Activated T-helper 1 cell treated with anti-CD3 and anti-CD28 coated beads, Interleukin-12 subunit alpha, Interleukin-12 subunit beta, Interleukin-2, Interleukin-4 antibody, amounts not matched to agents 30 ng/mL and 10 ng/mL and 1 ng/mL, durations not matched to agents 14 hours and 24 hours and 36 hours (primary cell): ENCODE measurements at regions of chr7 and their contacts with region 1.

Region 1: DNA sequence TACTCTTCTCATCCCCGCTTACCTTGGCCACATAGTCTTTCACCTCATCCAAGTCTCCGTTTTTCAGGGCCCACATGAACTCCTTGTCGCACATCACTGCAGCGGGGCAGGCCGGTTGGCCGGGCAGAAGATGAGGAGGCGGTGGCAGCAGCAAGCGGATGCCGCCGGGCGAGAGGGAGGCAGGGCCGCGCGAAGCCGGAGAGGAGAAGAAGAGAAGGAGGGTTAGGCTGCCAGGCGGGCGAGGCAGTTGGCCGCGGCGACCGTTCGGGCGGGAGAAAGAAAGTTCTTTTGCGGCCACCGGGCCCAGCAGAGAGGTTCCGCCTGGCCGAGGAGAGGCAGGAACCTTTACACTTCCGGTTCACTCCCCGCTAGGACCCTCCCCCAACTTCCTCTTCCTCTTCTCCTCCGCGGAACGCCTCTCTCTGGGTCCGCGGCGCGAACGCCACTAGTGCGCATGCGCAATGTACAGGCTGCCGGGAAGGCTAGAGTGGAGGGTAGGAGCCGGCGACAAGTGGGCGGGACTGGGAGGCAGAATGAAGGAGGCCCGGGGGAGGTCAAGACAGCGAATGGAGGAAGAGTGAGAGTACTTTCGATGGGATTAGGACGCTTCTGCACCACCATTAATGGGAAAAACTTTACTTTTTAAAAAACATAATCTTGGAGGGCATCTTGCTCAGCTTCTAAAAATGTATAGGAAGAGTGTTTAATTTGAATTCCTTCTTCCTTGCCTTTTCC is at the start of gene MTPN:
- DNase-seq: peak; percentile 98
- H3K4me3 Mint-ChIP-seq: peak within 1 kb of the TSS; percentile 98
- H3K27ac Mint-ChIP-seq: peak within 1 kb of the TSS; percentile 88
- H3K4me1 Mint-ChIP-seq: peaks cover 75% of the 10 kb centered on the region
- H3K27me3 Mint-ChIP-seq: peaks cover 2% of the 10 kb centered on the region
- total RNA-seq, gene MTPN: 117 and 119 TPM in 2 replicates

Region 2: DNA sequence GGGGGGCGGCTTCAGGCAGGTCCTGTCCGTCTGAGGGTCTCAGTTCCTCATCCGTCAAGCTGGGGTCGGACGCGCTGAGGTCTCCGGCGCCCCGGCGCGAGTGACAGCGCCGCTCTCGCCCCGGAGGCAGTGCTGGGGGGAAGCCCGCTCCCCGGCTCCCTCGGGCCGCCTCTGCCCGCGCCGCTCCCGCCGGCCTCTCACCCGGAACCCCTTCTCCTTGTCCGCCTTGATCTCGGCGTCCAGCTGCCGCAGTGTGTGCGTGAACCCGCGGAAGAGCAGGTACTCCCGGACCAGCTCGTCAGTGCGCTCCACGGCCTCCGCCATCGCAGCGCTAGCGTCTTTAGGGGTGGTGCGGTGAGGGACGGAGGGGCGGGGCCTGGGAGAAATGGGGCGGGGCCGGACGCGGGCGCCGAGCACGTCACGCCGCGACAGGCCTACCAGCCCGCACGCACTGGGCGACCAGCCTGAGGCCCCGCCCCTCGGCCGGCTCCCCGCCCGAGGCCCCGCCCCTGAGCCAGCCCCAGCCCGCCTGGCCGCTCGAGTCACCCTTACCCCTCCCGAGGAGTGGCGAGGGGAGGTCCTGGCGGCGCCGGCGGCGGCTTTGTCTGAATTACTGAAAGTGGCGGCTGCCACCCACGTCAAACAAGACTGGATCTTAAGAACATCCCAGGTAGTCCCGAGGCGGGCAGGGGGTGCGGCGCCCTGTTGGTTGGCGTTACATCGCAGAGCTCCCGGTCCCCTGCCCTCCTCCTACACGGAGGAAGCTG is 765.8 kb before region 1 on chr7 and contains the start of gene WDR91:
- intact Hi-C with region 1: loop called (anchors 2 kb)
- DNase-seq: peak; percentile 86
- H3K4me3 Mint-ChIP-seq: peak within 1 kb of the TSS; percentile 96
- H3K27ac Mint-ChIP-seq: peak within 1 kb of the TSS; percentile 98
- H3K4me1 Mint-ChIP-seq: peaks cover 47% of the 10 kb centered on the region
- H3K27me3 Mint-ChIP-seq: no peaks in the 10 kb centered on the region
- total RNA-seq, gene WDR91: 34.6 and 35.4 TPM in 2 replicates

Region 3: DNA sequence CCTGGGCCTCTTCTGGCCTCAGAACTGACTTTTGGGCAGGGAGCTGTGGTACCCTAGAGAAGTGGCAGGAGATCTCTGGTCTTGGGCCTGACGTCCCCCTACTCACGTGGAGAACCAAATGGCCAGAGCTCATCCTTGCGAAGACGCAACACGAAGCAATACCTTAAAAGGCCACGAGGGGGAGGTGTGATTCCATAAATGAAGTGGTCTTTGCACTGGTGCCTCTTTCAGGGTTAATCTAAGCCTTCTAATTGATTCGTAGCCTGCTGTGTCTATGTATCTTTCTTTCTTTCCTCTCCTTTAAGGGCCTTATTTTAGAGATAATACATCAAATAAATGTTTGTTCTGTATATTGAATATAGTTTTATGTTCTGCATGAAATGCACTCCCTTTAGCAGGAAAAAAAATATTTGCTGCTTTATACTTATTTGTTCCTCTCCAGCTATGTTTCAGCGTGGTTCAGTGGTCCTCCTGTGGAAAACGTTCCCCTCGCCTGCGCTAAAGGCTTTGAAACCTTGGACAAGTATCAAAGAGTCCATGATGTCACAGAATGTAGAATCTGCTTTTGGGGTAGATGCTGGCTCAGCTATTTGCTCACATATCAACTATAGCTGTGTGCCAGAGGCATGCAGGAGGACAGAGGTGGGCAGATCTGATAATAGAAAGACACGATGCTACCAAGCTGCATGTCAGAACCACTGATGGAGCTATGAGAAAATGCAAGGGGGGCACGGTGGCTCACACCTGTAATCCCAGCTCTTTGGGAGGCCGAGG is 702.5 kb before region 1 on chr7:
- intact Hi-C with region 1: loop called (anchors 10 kb)
- DNase-seq: peak; percentile 57
- H3K4me3 Mint-ChIP-seq: no peak overlapping the region
- H3K27ac Mint-ChIP-seq: no peak overlapping the region
- H3K4me1 Mint-ChIP-seq: no peaks in the 10 kb centered on the region
- H3K27me3 Mint-ChIP-seq: peaks cover 2% of the 10 kb centered on the region

Region 4: GRCh38 chr7:135335628-135336139 is 641.5 kb before region 1 on chr7:
- intact Hi-C with region 1: no loop called
- DNase-seq: peak; percentile 1
- H3K4me3 Mint-ChIP-seq: no peak overlapping the region
- H3K27ac Mint-ChIP-seq: no peak overlapping the region
- H3K4me1 Mint-ChIP-seq: no peaks in the 10 kb centered on the region
- H3K27me3 Mint-ChIP-seq: peaks cover 2% of the 10 kb centered on the region

Region 5: DNA sequence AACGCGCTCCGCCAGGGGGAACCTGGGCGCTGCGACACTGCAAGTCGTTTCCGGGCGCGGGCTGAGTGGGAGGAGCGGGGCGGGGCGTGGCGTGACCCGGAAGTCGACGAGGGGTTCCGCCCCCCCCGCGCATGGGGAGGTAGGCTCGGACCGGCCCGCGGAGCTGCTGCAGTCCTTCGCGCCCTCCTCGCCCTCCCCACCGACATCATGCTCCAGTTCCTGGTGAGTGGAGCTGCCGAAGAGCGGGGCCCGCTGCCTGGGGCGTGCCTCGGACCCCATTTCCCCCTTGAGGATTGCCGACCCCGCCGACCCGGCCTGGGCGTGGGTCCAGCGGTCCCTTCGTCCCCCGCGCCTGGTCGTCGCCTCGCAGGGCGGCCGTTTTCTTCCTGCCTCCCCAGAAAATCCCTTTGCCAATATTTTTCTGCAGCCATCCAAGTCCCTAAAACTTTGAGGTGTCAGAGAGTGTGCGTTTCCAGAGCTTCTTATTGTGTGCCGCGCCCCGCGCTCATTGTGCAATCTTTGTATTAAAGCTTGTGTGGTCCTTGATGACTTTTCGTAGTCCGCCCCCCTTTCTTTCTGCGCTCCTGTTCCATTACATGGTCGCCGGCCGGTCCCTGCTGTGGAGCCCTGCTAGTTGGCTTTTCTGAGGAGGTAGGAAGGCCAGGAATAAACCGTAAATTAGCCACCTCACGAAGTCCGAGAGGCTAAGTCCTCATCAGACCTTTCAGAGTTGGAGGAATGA is 314.6 kb before region 1 on chr7 and contains the start of gene STMP1:
- intact Hi-C with region 1: loop called (anchors 1 kb)
- DNase-seq: peak; percentile 93
- H3K4me3 Mint-ChIP-seq: peak within 1 kb of the TSS; percentile 97
- H3K27ac Mint-ChIP-seq: peak within 1 kb of the TSS; percentile 93
- H3K4me1 Mint-ChIP-seq: peaks cover 22% of the 10 kb centered on the region
- H3K27me3 Mint-ChIP-seq: no peaks in the 10 kb centered on the region
- total RNA-seq, gene STMP1: 22.7 and 24.7 TPM in 2 replicates

Region 6: DNA sequence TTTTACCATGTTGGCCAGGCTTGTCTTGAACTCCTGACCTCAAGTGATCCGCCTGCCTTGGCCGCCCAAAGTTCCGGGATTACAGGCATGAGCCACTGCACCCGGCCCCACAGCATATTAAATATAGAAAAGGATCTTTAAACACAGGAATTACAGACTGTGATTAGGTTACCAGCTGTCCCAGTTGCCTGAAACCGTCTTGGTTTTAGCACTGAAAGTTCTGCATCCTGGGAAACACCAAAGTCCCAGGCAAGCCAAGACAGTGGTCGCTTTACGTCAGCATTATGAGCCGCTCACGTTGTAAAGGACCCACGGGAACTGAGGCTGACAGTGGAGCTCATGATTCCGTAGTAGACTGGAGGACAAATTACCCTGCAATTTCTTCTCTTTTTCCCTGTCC is 159.6 kb before region 1 on chr7:
- intact Hi-C with region 1: no loop called
- DNase-seq: no peak
- H3K4me3 Mint-ChIP-seq: no peak overlapping the region
- H3K27ac Mint-ChIP-seq: no peak overlapping the region
- H3K4me1 Mint-ChIP-seq: no peaks in the 10 kb centered on the region
- H3K27me3 Mint-ChIP-seq: peaks cover 1% of the 10 kb centered on the region

Region 7: GRCh38 chr7:135993950-135994349 is 16.8 kb after region 1 on chr7:
- intact Hi-C with region 1: loop called (anchors 2 kb)
- DNase-seq: no peak
- H3K4me3 Mint-ChIP-seq: no peak overlapping the region
- H3K27ac Mint-ChIP-seq: no peak overlapping the region
- H3K4me1 Mint-ChIP-seq: peaks cover 28% of the 10 kb centered on the region
- H3K27me3 Mint-ChIP-seq: no peaks in the 10 kb centered on the region

Region 8: GRCh38 chr7:136009488-136010079 is 32.4 kb after region 1 on chr7:
- intact Hi-C with region 1: loop called (anchors 1 kb)
- DNase-seq: no peak
- H3K4me3 Mint-ChIP-seq: no peak overlapping the region
- H3K27ac Mint-ChIP-seq: no peak overlapping the region
- H3K4me1 Mint-ChIP-seq: peaks cover 4% of the 10 kb centered on the region
- H3K27me3 Mint-ChIP-seq: no peaks in the 10 kb centered on the region

Region 9: DNA sequence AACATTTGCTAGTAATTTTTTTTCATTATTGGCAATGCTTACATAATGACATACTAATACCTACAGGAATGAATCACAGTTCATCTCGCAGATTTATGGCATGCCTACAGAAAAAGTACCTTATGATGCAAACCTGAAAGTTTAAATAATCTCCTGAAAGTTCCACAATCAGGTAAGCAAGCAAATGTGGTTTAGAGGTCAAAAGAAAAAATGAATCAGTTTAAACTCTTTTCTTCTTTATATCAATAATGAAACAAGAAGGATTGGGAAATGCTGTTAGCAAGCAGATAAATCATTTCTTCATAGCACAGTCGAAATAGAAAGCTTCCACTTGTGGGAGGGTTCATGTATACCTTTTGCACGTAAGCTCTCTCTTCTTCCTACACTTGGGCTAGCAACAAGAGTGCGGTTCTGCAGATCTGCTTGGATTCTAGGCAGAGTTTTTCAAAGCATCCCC is 53.7 kb after region 1 on chr7:
- intact Hi-C with region 1: loop called (anchors 1 kb)
- DNase-seq: no peak
- H3K4me3 Mint-ChIP-seq: no peak overlapping the region
- H3K27ac Mint-ChIP-seq: peak overlapping the region; percentile 54
- H3K4me1 Mint-ChIP-seq: peaks cover 12% of the 10 kb centered on the region
- H3K27me3 Mint-ChIP-seq: peaks cover 1% of the 10 kb centered on the region